Mammary epithelial cell (primary cell): ENCODE measurements at regions of chr19 and their contacts with region 1.

Region 1: DNA sequence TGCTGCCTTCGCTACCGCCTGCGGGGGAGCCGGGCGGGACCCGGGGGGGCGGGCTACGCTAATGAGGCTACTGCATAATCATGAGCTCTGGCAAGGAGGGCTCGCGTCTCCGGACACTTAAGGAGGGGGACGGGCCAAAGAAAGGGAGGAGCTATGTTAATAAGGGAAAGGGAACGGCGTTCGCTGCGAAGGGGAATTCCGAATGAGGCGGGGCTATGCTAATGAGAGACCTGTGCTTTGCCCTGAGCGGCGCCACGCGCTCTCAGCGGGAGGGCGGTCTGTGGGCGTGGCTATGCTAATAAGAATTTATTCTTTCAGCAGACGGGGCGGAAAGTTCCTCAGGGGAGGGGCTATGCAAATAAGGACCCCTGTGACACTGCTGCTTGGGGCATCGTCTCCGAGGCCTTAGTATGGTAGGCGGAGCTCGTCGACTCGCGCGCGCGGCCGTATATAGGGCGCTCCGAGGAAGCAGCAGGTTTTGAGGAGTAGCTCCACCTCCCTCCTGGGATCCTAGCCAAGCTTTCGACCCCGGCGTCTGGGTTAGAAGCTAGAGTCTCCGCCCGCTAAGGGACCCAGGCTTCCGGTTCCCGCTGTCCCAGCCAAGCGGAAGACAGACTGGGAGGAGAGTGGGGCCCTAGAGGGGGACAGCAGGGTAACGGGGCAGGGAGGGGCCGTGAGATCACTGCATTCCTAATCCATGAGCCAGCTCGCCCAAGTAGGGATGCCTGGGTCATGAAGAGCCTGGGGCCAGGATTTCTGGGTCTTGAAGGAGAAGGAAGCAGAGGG is at the start of gene RRAS:
- DNase-seq: peak; percentile 100
- H3K4me3 ChIP-seq: peak within 1 kb of the TSS; percentile 56 to 87 (median 61)
- H3K27ac ChIP-seq: peak within 1 kb of the TSS; percentile 100
- H3K4me1 ChIP-seq: peaks cover 27% of the 10 kb centered on the region
- H3K27me3 ChIP-seq: no peaks in the 10 kb centered on the region
- CTCF ChIP-seq: no peak
- total RNA-seq, gene RRAS: 20.5 to 84.2 TPM

Region 2: GRCh38 chr19:49497047-49497788 is 143.1 kb before region 1 on chr19:
- CTCF ChIA-PET with region 1: no interaction called
- dilution Hi-C with region 1: no loop called
- in situ Hi-C with region 1: no loop called
- intact Hi-C with region 1: loop called (anchors 1 kb)
- DNase-seq: peak; percentile 52
- H3K4me3 ChIP-seq: peak overlapping the region; percentile 81 to 99 (median 98)
- H3K27ac ChIP-seq: peak overlapping the region; percentile 95
- H3K4me1 ChIP-seq: peaks cover 12% of the 10 kb centered on the region
- H3K27me3 ChIP-seq: no peaks in the 10 kb centered on the region
- CTCF ChIP-seq: no peak

Region 3: GRCh38 chr19:49580264-49581006 is 59.9 kb before region 1 on chr19 and contains the start of gene NOSIP:
- CTCF ChIA-PET with region 1: no interaction called
- dilution Hi-C with region 1: no loop called
- in situ Hi-C with region 1: no loop called
- intact Hi-C with region 1: loop called (anchors 1 kb)
- DNase-seq: peak; percentile 93
- H3K4me3 ChIP-seq: peak within 1 kb of the TSS; percentile 65 to 94 (median 81)
- H3K27ac ChIP-seq: peak within 1 kb of the TSS; percentile 58
- H3K4me1 ChIP-seq: peaks cover 20% of the 10 kb centered on the region
- H3K27me3 ChIP-seq: no peaks in the 10 kb centered on the region
- CTCF ChIP-seq: no peak
- total RNA-seq, gene NOSIP: 43.6 to 50.7 TPM

Region 4: DNA sequence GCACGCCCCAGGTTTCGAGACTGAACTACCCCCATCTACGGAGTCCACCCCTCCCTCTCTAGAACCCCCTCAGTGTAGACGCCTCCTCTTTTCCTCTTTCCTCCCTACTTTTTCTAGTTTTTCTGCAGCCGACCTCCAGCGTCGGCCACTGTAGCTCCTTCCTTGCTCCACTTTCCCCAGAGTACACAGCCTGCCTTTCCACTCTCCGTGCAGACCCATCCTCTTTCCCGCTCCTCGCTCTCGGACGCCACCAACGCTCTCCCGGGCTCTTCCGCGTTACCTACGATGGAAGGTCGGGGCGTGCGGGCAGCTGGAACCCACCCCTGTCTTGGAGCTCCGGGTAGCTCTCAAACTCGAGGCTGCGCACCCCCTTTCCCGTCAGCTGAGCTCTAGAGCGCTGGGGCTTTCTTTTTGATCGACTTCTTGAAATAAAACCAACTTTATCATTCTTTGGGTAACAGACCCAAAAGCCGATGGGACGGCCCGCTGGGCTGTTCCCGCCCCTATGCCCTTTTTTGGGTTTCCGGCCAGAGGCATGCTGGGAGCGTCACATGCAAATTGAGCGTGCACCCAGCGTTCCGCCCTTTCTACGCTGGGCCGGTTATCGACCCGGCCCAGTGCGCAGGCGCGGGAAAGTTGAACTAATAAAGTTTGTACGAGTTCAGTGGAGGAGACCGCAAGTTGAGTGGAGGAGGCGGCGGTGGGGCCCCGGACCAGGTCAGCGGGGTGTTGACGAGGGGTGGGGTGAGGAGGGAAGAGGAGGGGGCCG is 25.2 kb after region 1 on chr19 and contains the starts of genes BCL2L12 and IRF3:
- CTCF ChIA-PET with region 1: no interaction called
- dilution Hi-C with region 1: no loop called
- in situ Hi-C with region 1: no loop called
- intact Hi-C with region 1: loop called (anchors 1 kb)
- DNase-seq: peak; percentile 94
- H3K4me3 ChIP-seq: peak within 1 kb of the TSS; percentile 52 to 90 (median 81)
- H3K27ac ChIP-seq: peak within 1 kb of the TSS; percentile 80
- H3K4me1 ChIP-seq: peaks cover 15% of the 10 kb centered on the region
- H3K27me3 ChIP-seq: no peaks in the 10 kb centered on the region
- CTCF ChIP-seq: no peak
- total RNA-seq, gene BCL2L12: 4.3 to 43.1 TPM
- total RNA-seq, gene IRF3: 39.7 to 94.2 TPM

Region 5: GRCh38 chr19:49746206-49747091 is 106.1 kb after region 1 on chr19:
- CTCF ChIA-PET with region 1: no interaction called
- dilution Hi-C with region 1: loop called (anchors 5 kb)
- in situ Hi-C with region 1: no loop called
- intact Hi-C with region 1: no loop called
- DNase-seq: no peak
- H3K4me3 ChIP-seq: no peak overlapping the region
- H3K27ac ChIP-seq: no peak overlapping the region
- H3K4me1 ChIP-seq: no peaks in the 10 kb centered on the region
- H3K27me3 ChIP-seq: no peaks in the 10 kb centered on the region
- CTCF ChIP-seq: no peak

Region 6: GRCh38 chr19:49758292-49758691 is 118.0 kb after region 1 on chr19:
- CTCF ChIA-PET with region 1: no interaction called
- dilution Hi-C with region 1: no loop called
- in situ Hi-C with region 1: no loop called
- intact Hi-C with region 1: no loop called
- DNase-seq: no peak
- H3K4me3 ChIP-seq: no peak overlapping the region
- H3K27ac ChIP-seq: no peak overlapping the region
- H3K4me1 ChIP-seq: no peaks in the 10 kb centered on the region
- H3K27me3 ChIP-seq: no peaks in the 10 kb centered on the region
- CTCF ChIP-seq: no peak